GM12878 (cell line): ENCODE measurements at regions of chr12 and their contacts with region 1.

Region 1: DNA sequence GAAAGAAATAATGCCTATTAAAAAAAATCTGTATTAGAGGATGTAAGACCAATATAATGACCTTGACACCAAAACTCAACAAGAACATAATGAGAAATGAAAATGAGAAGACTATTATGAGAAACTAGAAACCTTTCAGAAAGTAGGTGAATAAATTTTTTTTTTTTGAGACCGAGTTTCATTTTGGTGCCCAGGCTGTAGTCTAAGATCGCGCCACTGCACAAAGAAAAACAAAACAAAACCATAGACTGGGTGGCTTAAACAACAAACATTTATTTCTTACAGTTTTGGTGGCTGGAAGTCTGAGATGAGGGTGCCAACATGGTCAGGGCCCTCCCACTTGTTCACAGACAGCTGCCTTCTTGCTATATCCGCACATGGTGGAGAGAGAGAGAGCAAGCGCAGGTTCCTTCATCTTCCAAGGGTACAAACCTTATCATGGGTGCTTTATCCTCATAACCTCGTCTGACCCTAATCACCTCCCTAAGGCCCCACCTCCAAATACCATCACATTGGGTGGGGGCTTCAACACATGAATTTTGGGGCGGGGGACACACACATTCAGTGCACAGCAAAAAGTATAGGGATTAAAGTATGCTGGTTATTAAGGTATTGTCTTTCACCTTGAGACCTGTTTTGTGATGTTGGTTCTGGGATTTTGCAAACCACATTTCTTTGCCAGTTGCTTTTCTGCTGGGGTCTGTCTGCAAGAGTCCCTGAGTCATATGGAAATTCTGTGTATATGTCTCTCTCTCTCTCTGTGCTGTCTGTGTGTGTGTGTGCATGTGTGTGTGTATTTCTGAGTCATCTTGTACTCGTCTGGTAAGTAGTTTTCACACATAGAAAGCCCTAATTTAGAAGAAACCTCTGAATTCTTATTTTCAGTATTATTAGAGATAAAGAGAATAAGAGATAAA is 26.2 kb downstream of the ZCRB1 start:
- DNase-seq: peak; percentile 97
- ATAC-seq: peak; percentile 88
- H3K4me3 ChIP-seq: peak overlapping the region; percentile 55; the same call in 1 of the 2 replicates
- H3K27ac ChIP-seq: peak overlapping the region; percentile 77
- H3K4me1 ChIP-seq: peaks cover 20% of the 10 kb centered on the region
- H3K27me3 ChIP-seq: no peaks in the 10 kb centered on the region
- CTCF ChIP-seq: no peak
- EP300 ChIP-seq: peak; percentile 96 to 97
- POLR2A ChIP-seq: no peak
- RAD21 ChIP-seq: peak; percentile 25; the same call in 1 of the 2 replicates

Region 2: GRCh38 chr12:42162193-42162592 is 137.5 kb before region 1 on chr12:
- CTCF ChIA-PET with region 1: no interaction called
- POLR2A ChIA-PET with region 1: no interaction called
- RAD21 ChIA-PET with region 1: no interaction called
- SMC1A ChIA-PET with region 1: no interaction called
- in situ Hi-C with region 1: no loop called
- intact Hi-C with region 1: no loop called
- DNase-seq: no peak
- ATAC-seq: no peak
- H3K4me3 ChIP-seq: no peak overlapping the region
- H3K27ac ChIP-seq: no peak overlapping the region
- H3K4me1 ChIP-seq: peaks cover 5% of the 10 kb centered on the region; the same call in 1 of the 2 replicates
- H3K27me3 ChIP-seq: no peaks in the 10 kb centered on the region
- CTCF ChIP-seq: no peak
- EP300 ChIP-seq: no peak
- POLR2A ChIP-seq: no peak
- RAD21 ChIP-seq: no peak

Region 3: GRCh38 chr12:42284157-42284556 is 15.5 kb before region 1 on chr12:
- CTCF ChIA-PET with region 1: no interaction called
- POLR2A ChIA-PET with region 1: interaction called, 8 read pairs
- RAD21 ChIA-PET with region 1: interaction called, 4 read pairs
- SMC1A ChIA-PET with region 1: interaction called, 10 read pairs
- in situ Hi-C with region 1: no loop called
- intact Hi-C with region 1: no loop called
- DNase-seq: no peak
- ATAC-seq: peak; percentile 43; the same call in 2 of the 3 replicates
- H3K4me3 ChIP-seq: no peak overlapping the region
- H3K27ac ChIP-seq: no peak overlapping the region
- H3K4me1 ChIP-seq: peaks cover 3% of the 10 kb centered on the region; the same call in 1 of the 2 replicates
- H3K27me3 ChIP-seq: no peaks in the 10 kb centered on the region
- CTCF ChIP-seq: peak in 1 of 3 experiments; percentile 3; a peak in 1 of 6 replicates
- EP300 ChIP-seq: 0 out of 4 replicates have a peak, but pooled peaks of 1 of the 2 experiments have one; percentile 12
- POLR2A ChIP-seq: no peak
- RAD21 ChIP-seq: 0 out of 2 replicates have a peak, but pooled peaks have one; percentile 1